AG04450 (cell line): ENCODE measurements at regions of chr17 and their contacts with region 1.

Region 1: GRCh38 chr17:49997791-49998703 is 3.0 kb upstream of the DLX3 start:
- DNase-seq: peak; percentile 50
- H3K4me3 ChIP-seq: no peak overlapping the region
- H3K27ac ChIP-seq: no peak overlapping the region
- H3K27me3 ChIP-seq: peaks cover 65% of the 10 kb centered on the region
- CTCF ChIP-seq: peak; percentile 90

Region 2: DNA sequence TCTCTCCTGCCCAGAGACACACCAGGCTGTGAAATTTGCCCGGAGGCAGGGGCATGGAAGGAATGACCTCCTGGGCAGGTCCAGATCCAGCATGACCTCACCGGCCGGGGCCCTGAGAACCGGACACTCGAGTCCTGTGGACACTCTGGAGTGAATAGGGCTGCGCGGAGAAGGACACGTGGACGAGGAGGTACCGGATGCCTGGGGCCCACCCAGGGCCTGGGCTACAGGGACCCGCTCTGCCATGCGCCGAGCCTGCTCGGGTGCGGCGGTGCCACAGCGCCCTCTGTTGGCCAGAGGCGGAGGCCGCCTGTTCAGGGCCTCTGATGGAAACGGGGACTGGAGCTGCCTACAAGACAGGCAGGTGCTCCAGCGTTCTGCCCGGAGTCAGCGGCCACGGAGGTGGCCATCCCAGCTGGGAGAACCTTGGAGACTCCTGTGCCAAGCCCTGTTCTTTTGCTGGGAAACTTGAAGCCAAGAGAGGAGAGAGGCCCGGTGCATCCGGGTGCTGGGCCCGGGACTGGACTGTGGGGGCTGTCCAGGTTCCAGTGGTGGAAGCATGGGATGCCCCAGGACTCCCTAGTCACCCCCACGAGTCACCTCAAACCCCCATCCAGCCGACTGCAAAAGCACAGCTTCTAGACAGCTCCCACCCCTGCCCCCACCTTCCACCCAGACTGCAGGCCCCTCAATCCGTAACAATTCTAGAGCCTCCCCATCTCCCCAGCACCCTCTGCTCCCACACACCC is 441.6 kb before region 1 on chr17:
- CTCF ChIA-PET with region 1: interaction called, 12 read pairs
- POLR2A ChIA-PET with region 1: no interaction called
- DNase-seq: no peak
- H3K4me3 ChIP-seq: no peak overlapping the region
- H3K27ac ChIP-seq: no peak overlapping the region
- H3K27me3 ChIP-seq: peaks cover 9% of the 10 kb centered on the region
- CTCF ChIP-seq: peak; percentile 98

Region 3: DNA sequence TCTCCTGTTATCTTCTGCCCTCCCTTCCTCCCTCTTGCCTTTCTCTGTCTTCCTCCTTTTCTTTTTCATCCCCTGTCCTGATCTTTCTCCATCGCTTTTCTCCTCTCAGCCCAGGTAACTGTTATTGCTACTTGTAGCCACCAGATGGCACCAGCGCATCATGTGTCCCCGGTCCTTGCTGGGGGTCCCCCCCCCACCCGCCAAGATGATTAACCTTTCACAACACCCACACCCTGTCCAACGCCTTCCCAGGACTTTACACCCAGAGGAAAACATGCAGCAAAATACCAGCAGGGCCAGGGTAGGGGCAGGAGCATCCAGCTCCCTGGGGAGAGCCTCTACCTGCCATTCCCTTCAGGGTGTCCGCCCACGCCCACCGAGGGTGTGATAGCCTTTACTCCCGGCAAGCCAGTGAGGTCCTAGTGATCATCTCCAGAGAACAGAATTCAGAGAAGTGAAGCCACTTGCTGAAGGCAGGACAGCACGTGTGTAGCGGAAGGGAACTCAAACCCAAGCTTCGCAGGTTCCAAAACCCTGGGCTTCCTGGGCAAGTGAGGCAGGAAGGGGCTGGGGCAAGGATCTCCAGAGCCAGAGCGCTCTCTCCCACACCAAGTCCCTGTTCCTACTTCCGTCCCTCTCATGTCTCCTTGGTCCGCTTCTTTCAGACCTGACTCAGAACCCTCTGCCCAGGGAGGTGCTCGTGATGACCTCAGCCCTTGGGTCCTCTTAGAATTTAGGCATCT is 136.7 kb before region 1 on chr17:
- CTCF ChIA-PET with region 1: interaction called, 249 read pairs
- POLR2A ChIA-PET with region 1: no interaction called
- DNase-seq: no peak
- H3K4me3 ChIP-seq: no peak overlapping the region
- H3K27ac ChIP-seq: no peak overlapping the region
- H3K27me3 ChIP-seq: peaks cover 29% of the 10 kb centered on the region
- CTCF ChIP-seq: peak; percentile 87

Region 4: GRCh38 chr17:49887086-49888028 is 110.7 kb before region 1 on chr17:
- CTCF ChIA-PET with region 1: interaction called, 20 read pairs
- POLR2A ChIA-PET with region 1: no interaction called
- DNase-seq: no peak
- H3K4me3 ChIP-seq: no peak overlapping the region
- H3K27ac ChIP-seq: no peak overlapping the region
- H3K27me3 ChIP-seq: peaks cover 78% of the 10 kb centered on the region
- CTCF ChIP-seq: no peak

Region 5: GRCh38 chr17:49987681-49988441 is 10.2 kb before region 1 on chr17:
- CTCF ChIA-PET with region 1: interaction called, 19 read pairs
- POLR2A ChIA-PET with region 1: no interaction called
- DNase-seq: no peak
- H3K4me3 ChIP-seq: no peak overlapping the region
- H3K27ac ChIP-seq: no peak overlapping the region
- H3K27me3 ChIP-seq: peaks cover 84% of the 10 kb centered on the region
- CTCF ChIP-seq: no peak

Region 6: DNA sequence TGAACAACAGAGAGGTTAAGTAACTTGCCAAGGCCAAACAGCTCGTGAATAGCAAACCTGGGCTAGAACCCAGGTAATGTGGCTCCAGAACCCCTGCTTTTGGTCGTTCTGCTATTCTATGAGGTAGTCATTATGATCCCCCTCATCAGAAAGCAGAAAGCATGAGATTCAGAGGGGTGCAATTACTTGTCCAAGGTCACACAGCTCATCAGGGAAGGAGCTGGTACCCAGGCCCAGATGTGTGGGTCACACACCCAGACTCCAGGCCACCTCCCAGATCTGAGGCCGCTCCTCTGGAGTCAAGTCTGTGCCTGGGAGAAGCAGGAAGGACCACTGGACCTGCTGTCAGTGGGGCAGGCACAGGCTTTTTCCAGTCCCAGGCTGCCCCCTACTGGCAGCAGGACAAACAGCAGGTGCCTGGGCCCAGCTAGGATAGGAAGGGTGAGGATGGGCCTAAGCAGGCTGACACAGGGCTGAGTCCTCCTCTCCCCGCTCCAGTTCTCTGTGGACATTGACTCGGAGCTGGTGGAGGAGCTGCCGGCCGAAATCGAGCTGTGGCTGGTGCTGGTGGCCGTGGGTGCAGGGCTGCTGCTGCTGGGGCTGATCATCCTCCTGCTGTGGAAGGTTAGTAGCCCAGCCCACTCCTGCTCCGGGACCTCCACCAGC is 89.3 kb after region 1 on chr17:
- CTCF ChIA-PET with region 1: interaction called, 46 read pairs
- POLR2A ChIA-PET with region 1: no interaction called
- DNase-seq: peak; percentile 48
- H3K4me3 ChIP-seq: no peak overlapping the region
- H3K27ac ChIP-seq: no peak overlapping the region
- H3K27me3 ChIP-seq: no peaks in the 10 kb centered on the region
- CTCF ChIP-seq: peak; percentile 95